Activated B cell treated with CpG ODN at 0.5 μM for 24 hours (primary cell): ENCODE measurements at regions of chr1 and their contacts with region 1.

Region 1: DNA sequence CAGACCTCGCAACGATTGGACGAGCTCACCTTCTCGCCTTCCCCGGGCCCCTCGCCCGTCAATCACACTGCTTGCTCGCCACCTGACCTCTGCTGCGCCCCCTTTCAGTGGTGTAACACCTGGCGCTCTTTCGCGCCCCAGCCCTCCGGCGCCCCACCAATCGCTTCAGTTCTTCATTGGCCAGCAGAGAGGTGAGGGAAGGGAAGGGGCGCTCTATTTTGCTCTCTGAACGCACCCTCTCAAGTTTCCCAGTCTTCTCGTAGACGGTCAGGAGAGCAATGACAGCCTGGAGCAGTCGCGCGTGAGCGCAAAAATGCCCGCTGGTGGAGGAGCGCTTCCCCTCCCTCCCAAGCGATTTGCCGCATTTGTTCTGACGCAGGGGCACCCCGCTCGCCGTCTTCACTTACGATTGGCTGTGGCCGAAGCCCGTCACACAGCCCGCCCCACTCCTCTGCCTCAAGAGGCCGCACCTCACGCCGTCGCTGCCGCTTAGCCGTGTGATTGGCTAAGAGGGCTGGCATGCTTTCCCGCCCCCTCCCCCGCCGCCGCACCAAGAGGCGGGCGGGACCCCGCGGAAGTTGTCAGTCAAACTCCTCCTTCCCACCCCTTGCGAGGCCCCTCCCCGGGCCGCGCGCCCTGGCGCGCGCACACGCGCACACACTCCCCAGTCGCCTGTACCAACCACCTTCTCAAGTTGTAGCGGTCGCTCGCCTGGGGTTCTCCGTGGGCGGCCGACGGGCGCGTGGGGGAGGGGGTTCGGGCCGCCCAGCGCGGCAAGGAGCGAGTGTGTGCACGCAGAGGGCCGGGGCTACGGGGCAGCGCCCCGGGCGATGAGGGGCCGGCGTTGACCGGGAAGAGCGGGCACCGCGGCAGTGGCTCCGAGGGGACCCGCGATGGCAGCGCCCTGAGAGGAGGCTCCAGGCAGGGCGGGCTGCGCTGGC is at the start of gene PPP2R5A:
- DNase-seq: peak; percentile 96
- ATAC-seq: peak; percentile 86
- H3K4me3 Mint-ChIP-seq: peak within 1 kb of the TSS; percentile 96
- H3K27ac Mint-ChIP-seq: peak within 1 kb of the TSS; percentile 98
- H3K4me1 Mint-ChIP-seq: peaks cover 40% of the 10 kb centered on the region
- H3K27me3 Mint-ChIP-seq: no peaks in the 10 kb centered on the region
- CTCF ChIP-seq: no peak
- total RNA-seq, gene PPP2R5A: 27.9 and 31.6 TPM in 2 replicates

Region 2: DNA sequence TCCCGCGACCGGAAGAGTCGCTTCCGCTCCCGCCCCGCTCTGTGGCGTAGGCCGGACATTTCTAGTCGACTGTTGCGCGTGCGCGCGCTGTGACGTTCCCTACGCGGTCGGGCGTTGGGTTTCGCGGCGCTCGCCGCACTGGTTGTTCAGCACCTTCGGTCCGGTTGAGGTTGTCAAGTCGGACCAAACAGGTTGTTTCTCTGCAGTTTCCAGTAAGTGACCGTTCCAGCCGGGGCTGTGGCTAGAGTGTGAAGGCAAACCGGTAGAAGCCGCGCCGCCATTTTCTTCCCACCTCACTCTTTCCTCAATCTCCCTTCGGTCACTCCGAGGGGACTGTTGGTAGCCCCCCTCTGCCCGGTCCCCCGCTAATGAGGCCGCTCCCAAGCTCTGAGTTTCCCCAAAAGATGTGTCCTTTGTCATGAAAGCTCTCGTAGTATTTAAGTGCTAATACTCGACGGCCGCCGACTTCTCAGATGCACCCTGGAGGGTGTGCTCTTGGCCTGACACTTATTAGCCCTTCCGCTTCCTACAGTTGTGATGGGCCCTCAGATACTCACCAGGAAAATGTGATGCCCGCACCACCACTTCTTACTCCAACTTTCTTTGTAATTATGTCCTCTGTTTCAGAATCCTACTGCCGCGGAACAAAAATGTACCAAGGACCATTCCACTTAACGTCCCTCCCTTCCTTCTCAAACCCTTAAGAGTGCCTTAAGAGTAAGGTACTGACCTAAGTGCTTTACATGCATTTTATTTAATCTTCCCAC is 902.1 kb before region 1 on chr1:
- CTCF ChIA-PET with region 1: no interaction called
- POLR2A ChIA-PET with region 1: no interaction called
- intact Hi-C with region 1: loop called (anchors 1 kb)
- DNase-seq: peak; percentile 86
- ATAC-seq: peak; percentile 96
- H3K4me3 Mint-ChIP-seq: peak overlapping the region; percentile 93
- H3K27ac Mint-ChIP-seq: peak overlapping the region; percentile 98
- H3K4me1 Mint-ChIP-seq: peaks cover 20% of the 10 kb centered on the region
- H3K27me3 Mint-ChIP-seq: no peaks in the 10 kb centered on the region
- CTCF ChIP-seq: no peak

Region 3: DNA sequence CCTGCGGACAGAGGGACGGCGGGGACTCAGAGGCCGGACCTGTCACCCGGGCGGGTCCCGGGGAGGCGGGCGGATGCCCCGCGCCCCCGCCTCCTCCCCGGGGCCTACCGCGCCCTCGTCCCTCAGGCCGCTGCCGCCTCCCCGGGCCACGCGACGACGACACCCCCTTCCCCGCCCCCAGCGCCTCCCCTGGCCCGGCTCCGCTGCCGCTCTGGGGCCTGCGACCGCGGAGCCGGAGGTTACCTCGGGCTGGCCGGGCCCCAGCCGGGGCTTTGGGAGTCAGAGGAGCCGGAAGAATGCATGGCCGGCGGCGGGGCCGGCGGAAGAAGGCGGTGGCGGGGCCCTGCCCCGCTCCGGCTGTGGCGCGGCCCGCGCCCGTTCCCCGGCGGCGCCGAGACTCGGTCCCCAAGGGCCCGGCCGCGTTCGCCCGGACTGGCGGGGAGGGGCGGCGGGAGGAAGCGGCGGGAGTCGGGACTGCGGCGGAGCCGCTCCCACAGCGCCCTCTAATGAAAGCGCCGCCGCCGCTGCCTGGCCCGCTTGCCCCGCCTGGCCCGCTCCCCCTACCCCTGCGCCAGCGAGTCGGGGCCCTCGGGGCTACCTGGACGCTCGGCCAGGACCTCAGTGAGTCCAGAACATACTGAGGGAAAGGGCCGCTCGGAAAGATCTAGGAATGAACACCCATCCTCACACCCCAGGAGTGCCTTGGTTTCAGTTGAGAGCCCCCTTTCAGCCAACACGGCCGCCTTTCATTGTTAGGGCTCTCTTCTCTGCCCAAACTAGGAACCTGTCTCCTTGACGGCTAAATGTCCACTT is 454.5 kb before region 1 on chr1 and contains the start of gene LPGAT1:
- CTCF ChIA-PET with region 1: no interaction called
- POLR2A ChIA-PET with region 1: no interaction called
- intact Hi-C with region 1: loop called (anchors 2 kb)
- DNase-seq: peak; percentile 78
- ATAC-seq: peak; percentile 86
- H3K4me3 Mint-ChIP-seq: peak within 1 kb of the TSS; percentile 95
- H3K27ac Mint-ChIP-seq: peak within 1 kb of the TSS; percentile 89
- H3K4me1 Mint-ChIP-seq: peaks cover 55% of the 10 kb centered on the region
- H3K27me3 Mint-ChIP-seq: no peaks in the 10 kb centered on the region
- CTCF ChIP-seq: no peak
- total RNA-seq, gene LPGAT1: 39.2 and 43.6 TPM in 2 replicates

Region 4: DNA sequence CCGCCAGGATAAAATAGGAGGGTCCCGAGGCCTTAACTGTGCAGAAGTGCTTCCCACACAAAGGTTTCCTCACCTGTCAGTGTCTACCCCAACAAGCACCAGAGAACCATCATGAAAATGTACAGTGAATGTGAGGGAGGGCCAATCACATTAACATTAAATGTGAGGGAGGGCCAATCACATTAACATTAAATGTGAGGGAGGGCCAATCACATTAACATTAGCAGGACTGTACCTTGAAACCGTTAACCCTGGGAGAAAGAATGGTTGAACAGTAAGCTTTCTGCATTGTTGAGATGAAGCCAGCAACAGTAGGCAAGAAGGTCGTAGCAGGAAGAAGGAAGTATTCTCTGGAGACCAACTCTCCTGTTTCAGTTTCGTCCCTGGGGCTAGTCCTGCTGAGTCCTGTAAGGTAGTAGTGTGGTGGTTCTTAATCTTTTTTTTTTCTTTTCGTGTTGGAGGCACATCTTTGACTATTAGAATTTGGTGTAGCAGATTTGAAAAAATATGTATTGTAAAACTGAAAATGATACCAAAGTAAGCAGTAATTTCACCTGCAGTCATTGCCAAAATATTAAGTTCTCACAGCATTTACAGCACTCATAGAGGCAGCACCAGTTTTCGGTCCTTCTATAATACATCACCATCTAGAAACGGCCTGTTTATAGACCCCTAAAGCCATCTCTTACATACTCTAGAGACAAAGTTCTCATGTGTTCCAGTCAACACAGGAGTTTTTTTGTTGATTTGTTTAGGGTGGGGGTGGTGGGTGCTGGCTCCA is 98.4 kb before region 1 on chr1:
- CTCF ChIA-PET with region 1: no interaction called
- POLR2A ChIA-PET with region 1: no interaction called
- intact Hi-C with region 1: loop called (anchors 5 kb)
- DNase-seq: no peak
- ATAC-seq: peak; percentile 97
- H3K4me3 Mint-ChIP-seq: peak overlapping the region; percentile 67
- H3K27ac Mint-ChIP-seq: peak overlapping the region; percentile 63
- H3K4me1 Mint-ChIP-seq: peaks cover 27% of the 10 kb centered on the region
- H3K27me3 Mint-ChIP-seq: no peaks in the 10 kb centered on the region
- CTCF ChIP-seq: no peak

Region 5: DNA sequence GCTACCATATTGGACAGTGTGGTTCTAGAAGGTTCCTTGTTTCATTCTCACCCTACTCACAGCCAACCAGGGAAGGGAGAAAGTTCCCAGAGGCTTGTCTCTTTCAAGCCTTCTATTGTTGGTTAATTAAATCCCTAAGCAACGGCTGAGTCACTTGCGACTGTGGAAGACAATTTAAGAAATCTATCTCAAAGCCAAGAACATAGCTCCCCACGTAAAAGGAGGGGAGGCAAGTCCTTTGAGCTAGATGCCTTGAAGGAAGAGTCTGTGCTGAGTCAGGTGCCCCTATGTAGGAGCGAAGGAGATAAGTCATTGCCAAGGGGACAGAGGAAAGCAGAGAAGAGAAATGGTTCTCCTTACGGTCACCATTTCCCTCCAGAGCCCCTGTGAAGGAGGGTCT is 79.2 kb before region 1 on chr1:
- CTCF ChIA-PET with region 1: no interaction called
- POLR2A ChIA-PET with region 1: no interaction called
- intact Hi-C with region 1: no loop called
- DNase-seq: no peak
- ATAC-seq: no peak
- H3K4me3 Mint-ChIP-seq: no peak overlapping the region
- H3K27ac Mint-ChIP-seq: no peak overlapping the region
- H3K4me1 Mint-ChIP-seq: no peaks in the 10 kb centered on the region
- H3K27me3 Mint-ChIP-seq: peaks cover 3% of the 10 kb centered on the region
- CTCF ChIP-seq: no peak

Region 6: GRCh38 chr1:212558693-212559480 is 273.9 kb after region 1 on chr1:
- CTCF ChIA-PET with region 1: no interaction called
- POLR2A ChIA-PET with region 1: no interaction called
- intact Hi-C with region 1: loop called (anchors 5 kb)
- DNase-seq: peak; percentile 93
- ATAC-seq: peak; percentile 88
- H3K4me3 Mint-ChIP-seq: peak overlapping the region; percentile 88
- H3K27ac Mint-ChIP-seq: peak overlapping the region; percentile 93
- H3K4me1 Mint-ChIP-seq: peaks cover 13% of the 10 kb centered on the region
- H3K27me3 Mint-ChIP-seq: peaks cover 2% of the 10 kb centered on the region
- CTCF ChIP-seq: no peak

Region 7: GRCh38 chr1:212791676-212792395 is 506.8 kb after region 1 on chr1 and contains the starts of genes NSL1 and TATDN3:
- CTCF ChIA-PET with region 1: no interaction called
- POLR2A ChIA-PET with region 1: interaction called, 6 read pairs
- intact Hi-C with region 1: loop called (anchors 2 kb)
- DNase-seq: peak; percentile 98
- ATAC-seq: peak; percentile 73
- H3K4me3 Mint-ChIP-seq: peak within 1 kb of the TSS; percentile 99
- H3K27ac Mint-ChIP-seq: peak within 1 kb of the TSS; percentile 98
- H3K4me1 Mint-ChIP-seq: peaks cover 60% of the 10 kb centered on the region
- H3K27me3 Mint-ChIP-seq: no peaks in the 10 kb centered on the region
- CTCF ChIP-seq: no peak
- total RNA-seq, gene NSL1: 34.4 and 44.5 TPM in 2 replicates
- total RNA-seq, gene TATDN3: 30.3 and 31.4 TPM in 2 replicates